GM12878 (cell line): ENCODE measurements at regions of chr9 and their contacts with region 1.

Region 1: GRCh38 chr9:120348951-120349429 is 231.0 kb downstream of the CDK5RAP2 start:
- DNase-seq: no peak
- ATAC-seq: peak; percentile 86
- H3K4me3 ChIP-seq: no peak overlapping the region
- H3K27ac ChIP-seq: no peak overlapping the region
- H3K4me1 ChIP-seq: no peaks in the 10 kb centered on the region
- H3K27me3 ChIP-seq: no peaks in the 10 kb centered on the region; a peak in 1 of 4 replicates
- CTCF ChIP-seq: peak; percentile 48 to 68 (median 54); a peak in 5 of 6 replicates
- EP300 ChIP-seq: no peak
- POLR2A ChIP-seq: no peak
- RAD21 ChIP-seq: peak; percentile 62

Region 2: GRCh38 chr9:119375892-119376291 is 973.1 kb before region 1 on chr9:
- CTCF ChIA-PET with region 1: no interaction called
- POLR2A ChIA-PET with region 1: no interaction called
- RAD21 ChIA-PET with region 1: no interaction called
- SMC1A ChIA-PET with region 1: no interaction called
- in situ Hi-C with region 1: no loop called
- intact Hi-C with region 1: loop called (anchors 5 kb)
- DNase-seq: no peak
- ATAC-seq: peak; percentile 33; the same call in 2 of the 3 replicates
- H3K4me3 ChIP-seq: no peak overlapping the region
- H3K27ac ChIP-seq: no peak overlapping the region
- H3K4me1 ChIP-seq: no peaks in the 10 kb centered on the region
- H3K27me3 ChIP-seq: no peaks in the 10 kb centered on the region
- CTCF ChIP-seq: peak; percentile 23 to 31 (median 30); a peak in 3 of 6 replicates
- EP300 ChIP-seq: no peak
- POLR2A ChIP-seq: no peak
- RAD21 ChIP-seq: no peak

Region 3: GRCh38 chr9:119556129-119556875 is 792.7 kb before region 1 on chr9:
- CTCF ChIA-PET with region 1: interaction called, 3 read pairs
- POLR2A ChIA-PET with region 1: no interaction called
- RAD21 ChIA-PET with region 1: no interaction called
- SMC1A ChIA-PET with region 1: no interaction called
- in situ Hi-C with region 1: no loop called
- intact Hi-C with region 1: loop called (anchors 1 kb)
- DNase-seq: no peak
- ATAC-seq: peak; percentile 100
- H3K4me3 ChIP-seq: no peak overlapping the region
- H3K27ac ChIP-seq: no peak overlapping the region
- H3K4me1 ChIP-seq: no peaks in the 10 kb centered on the region
- H3K27me3 ChIP-seq: no peaks in the 10 kb centered on the region
- CTCF ChIP-seq: peak; percentile 85 to 96 (median 91)
- EP300 ChIP-seq: no peak
- POLR2A ChIP-seq: no peak
- RAD21 ChIP-seq: peak; percentile 72

Region 4: DNA sequence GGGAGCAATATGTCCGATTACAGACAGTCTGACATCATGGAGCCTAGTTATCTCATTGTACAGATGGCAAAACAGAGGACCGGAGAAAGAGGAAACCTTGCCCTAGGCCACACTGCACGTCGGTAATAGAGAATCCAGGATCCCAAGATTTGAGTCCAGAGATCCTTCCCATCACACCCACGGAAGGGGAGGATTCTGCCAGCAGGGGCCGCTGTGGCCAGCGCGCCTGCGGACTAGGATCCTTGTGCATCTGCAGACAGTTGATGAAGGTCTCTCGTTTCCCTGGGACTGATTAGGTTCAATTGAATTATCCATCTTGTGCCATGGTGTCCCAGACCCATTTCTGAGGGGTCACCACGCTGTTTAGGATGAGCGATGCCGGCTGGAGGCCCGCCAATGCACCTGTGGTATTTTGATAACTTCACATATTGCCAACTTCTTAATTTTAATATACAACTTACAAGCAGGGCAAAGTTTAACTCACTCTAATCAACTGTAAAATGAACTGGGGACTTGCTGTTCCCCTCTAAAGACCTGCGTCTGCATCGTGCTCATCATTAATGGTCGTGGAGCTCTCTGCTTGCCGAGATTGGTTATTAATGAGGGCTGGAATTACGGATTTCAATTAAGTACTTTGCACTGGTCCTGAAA is 387.1 kb before region 1 on chr9:
- CTCF ChIA-PET with region 1: interaction called, 4 read pairs
- POLR2A ChIA-PET with region 1: no interaction called
- RAD21 ChIA-PET with region 1: no interaction called
- SMC1A ChIA-PET with region 1: no interaction called
- in situ Hi-C with region 1: no loop called
- intact Hi-C with region 1: loop called (anchors 2 kb)
- DNase-seq: no peak
- ATAC-seq: peak; percentile 63
- H3K4me3 ChIP-seq: no peak overlapping the region
- H3K27ac ChIP-seq: no peak overlapping the region
- H3K4me1 ChIP-seq: no peaks in the 10 kb centered on the region
- H3K27me3 ChIP-seq: no peaks in the 10 kb centered on the region; a peak in 1 of 4 replicates
- CTCF ChIP-seq: peak; percentile 65 to 86 (median 83)
- EP300 ChIP-seq: no peak
- POLR2A ChIP-seq: no peak
- RAD21 ChIP-seq: peak; percentile 25; the same call in 1 of the 2 replicates

Region 5: DNA sequence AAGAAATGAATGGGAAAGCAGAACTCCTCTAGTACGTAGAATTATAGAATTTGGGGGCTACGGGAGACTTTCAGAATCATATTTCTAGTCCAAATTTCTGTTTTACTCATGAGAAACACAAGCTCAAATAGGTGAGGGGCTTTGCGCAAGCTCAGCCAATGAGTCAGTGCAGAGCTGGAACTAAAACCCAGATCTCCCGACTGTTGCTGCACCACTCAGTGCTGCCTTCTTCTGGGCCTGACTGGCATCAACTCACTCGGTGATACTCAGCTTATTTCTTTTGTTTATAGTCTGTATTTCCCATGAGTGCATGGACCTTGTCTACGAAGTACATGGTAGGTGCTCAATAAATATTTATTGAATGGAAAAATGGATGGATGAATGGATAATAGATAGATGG is 49.2 kb before region 1 on chr9:
- CTCF ChIA-PET with region 1: no interaction called
- POLR2A ChIA-PET with region 1: no interaction called
- RAD21 ChIA-PET with region 1: no interaction called
- SMC1A ChIA-PET with region 1: no interaction called
- in situ Hi-C with region 1: no loop called
- intact Hi-C with region 1: loop called (anchors 10 kb)
- DNase-seq: no peak
- ATAC-seq: no peak
- H3K4me3 ChIP-seq: no peak overlapping the region
- H3K27ac ChIP-seq: no peak overlapping the region
- H3K4me1 ChIP-seq: no peaks in the 10 kb centered on the region
- H3K27me3 ChIP-seq: no peaks in the 10 kb centered on the region
- CTCF ChIP-seq: no peak
- EP300 ChIP-seq: no peak
- POLR2A ChIP-seq: no peak
- RAD21 ChIP-seq: no peak

Region 6: GRCh38 chr9:120394058-120394669 is 45.2 kb after region 1 on chr9:
- CTCF ChIA-PET with region 1: no interaction called
- POLR2A ChIA-PET with region 1: no interaction called
- RAD21 ChIA-PET with region 1: no interaction called
- SMC1A ChIA-PET with region 1: no interaction called
- in situ Hi-C with region 1: no loop called
- intact Hi-C with region 1: no loop called
- DNase-seq: no peak
- ATAC-seq: no peak
- H3K4me3 ChIP-seq: no peak overlapping the region
- H3K27ac ChIP-seq: no peak overlapping the region
- H3K4me1 ChIP-seq: no peaks in the 10 kb centered on the region
- H3K27me3 ChIP-seq: no peaks in the 10 kb centered on the region
- CTCF ChIP-seq: no peak
- EP300 ChIP-seq: no peak
- POLR2A ChIP-seq: no peak
- RAD21 ChIP-seq: no peak